MCF 10A (cell line): ENCODE measurements at regions of chr4 and their contacts with region 1.

Region 1: DNA sequence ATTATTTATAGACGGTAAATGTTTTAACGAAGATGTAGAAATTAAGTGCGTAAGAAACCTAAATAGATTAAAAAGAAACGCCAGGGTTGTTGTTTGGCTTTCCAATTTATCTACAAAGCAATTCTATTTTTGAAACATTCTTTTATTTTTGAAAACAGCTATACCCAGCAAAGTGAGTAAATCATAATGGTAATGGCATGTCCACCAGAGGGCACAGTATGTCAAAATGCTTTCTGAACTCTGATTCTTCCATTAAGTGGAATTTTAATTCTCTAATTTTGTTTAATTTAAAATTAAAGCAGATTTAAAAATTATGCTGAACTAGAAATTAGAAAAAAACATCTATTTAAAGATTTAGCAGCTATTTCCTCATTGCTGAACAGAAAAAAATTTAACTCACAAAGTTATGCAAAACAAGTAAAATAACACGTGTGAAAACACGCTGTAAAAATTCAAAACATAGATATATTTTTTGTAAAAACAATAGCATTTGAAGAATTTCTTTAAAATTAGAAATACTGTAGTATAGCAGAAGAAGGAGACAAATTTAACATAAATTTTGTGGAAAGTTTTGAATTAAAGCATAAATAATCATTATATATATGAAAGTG is 26.5 kb downstream of the RASSF6 start:
- DNase-seq: peak; percentile 51
- H3K4me3 Mint-ChIP-seq: no peak overlapping the region
- H3K27ac Mint-ChIP-seq: no peak overlapping the region
- H3K4me1 Mint-ChIP-seq: peaks cover 18% of the 10 kb centered on the region
- H3K27me3 Mint-ChIP-seq: no peaks in the 10 kb centered on the region
- CTCF ChIP-seq: peak; percentile 38

Region 2: GRCh38 chr4:73573794-73574406 is 19.8 kb before region 1 on chr4:
- CTCF ChIA-PET with region 1: interaction called, 21 read pairs
- POLR2A ChIA-PET with region 1: interaction called, 3 read pairs
- intact Hi-C with region 1: no loop called
- DNase-seq: peak; percentile 83
- H3K4me3 Mint-ChIP-seq: no peak overlapping the region
- H3K27ac Mint-ChIP-seq: no peak overlapping the region
- H3K4me1 Mint-ChIP-seq: no peaks in the 10 kb centered on the region
- H3K27me3 Mint-ChIP-seq: no peaks in the 10 kb centered on the region
- CTCF ChIP-seq: peak; percentile 83

Region 3: DNA sequence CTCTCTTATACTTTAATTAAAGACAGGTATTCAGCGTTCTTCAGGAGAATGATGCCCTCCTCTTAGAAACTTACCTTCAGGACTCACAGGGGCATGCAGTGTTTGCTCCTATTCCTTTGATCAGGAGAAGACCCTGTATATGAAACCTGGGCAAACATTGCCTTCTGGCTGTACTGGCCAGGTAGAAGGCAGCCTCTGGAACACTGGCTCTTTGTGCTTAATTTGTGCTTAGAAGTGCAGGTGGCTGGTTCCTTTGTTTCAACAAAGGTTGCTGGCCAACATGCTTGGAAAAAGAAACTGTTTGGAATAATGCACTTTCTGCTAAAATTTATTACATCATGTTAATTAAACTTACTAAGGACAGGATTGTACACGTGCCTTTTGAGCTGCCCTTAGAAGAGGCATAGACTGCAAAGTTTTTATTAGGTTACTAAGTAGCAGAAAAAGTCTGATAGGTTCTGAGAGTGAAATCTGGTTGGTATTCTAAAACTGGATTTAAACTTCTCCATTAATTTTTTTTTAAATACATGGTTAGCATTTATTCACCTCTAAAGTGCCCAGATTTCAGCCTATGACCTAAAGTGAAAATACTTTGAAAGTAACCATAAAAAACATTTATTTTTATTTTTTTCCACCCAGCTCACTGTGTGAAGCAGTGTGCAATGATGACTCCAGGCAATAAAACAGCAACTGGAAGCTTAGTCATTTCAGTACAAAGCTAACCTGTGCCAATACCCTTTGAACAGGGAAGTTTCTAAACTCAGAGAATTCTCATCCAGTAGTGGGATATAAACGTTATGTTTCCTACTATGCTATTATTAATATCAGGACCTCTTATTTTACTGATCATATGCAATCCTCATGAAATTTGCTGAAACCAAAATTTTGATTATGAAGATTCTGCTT is 15.2 kb after region 1 on chr4:
- CTCF ChIA-PET with region 1: interaction called, 15 read pairs
- POLR2A ChIA-PET with region 1: interaction called, 15 read pairs
- intact Hi-C with region 1: no loop called
- DNase-seq: peak; percentile 71
- H3K4me3 Mint-ChIP-seq: no peak overlapping the region
- H3K27ac Mint-ChIP-seq: peak overlapping the region; percentile 6
- H3K4me1 Mint-ChIP-seq: peaks cover 50% of the 10 kb centered on the region
- H3K27me3 Mint-ChIP-seq: no peaks in the 10 kb centered on the region
- CTCF ChIP-seq: no peak

Region 4: DNA sequence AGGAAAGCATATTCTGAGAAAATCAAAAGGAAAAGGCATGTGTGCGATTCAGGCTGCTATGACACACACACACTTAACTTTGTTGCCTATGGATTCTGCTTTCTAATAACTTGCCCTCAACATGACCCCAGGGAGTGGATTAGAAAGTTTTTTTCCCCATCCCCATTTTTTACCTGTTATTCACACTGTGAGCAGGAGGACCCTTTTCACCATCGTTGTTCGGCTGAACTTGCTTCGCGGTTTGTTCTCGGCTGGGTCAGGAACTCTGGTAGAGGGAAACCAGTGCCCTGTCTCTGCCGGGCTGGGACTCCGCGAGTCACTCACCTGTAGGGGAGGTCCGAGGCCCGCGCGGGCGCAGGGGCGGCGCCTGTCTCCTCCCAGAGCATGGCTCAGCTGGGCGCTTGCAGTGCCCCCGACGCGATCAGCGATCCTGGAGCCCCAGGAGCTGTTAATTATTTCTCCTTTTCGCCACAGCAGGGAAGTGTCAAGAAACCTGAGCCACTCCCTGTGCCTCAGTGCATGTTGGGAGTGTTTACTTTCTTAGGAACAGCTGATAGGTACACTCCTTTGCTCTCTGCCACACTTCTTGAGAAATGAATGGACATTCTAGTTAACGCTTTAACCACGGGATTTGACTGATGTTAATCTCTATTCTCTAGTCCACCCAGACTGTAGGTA is 26.5 kb after region 1 on chr4 and contains the start of gene RASSF6:
- CTCF ChIA-PET with region 1: interaction called, 4 read pairs
- POLR2A ChIA-PET with region 1: interaction called, 22 read pairs
- intact Hi-C with region 1: no loop called
- DNase-seq: peak; percentile 63
- H3K4me3 Mint-ChIP-seq: peak within 1 kb of the TSS; percentile 84
- H3K27ac Mint-ChIP-seq: peak within 1 kb of the TSS; percentile 47
- H3K4me1 Mint-ChIP-seq: peaks cover 19% of the 10 kb centered on the region
- H3K27me3 Mint-ChIP-seq: no peaks in the 10 kb centered on the region
- CTCF ChIP-seq: no peak
- total RNA-seq, gene RASSF6: 1.6 and 2.4 TPM in 2 replicates